Heart left ventricle (tissue), 16 donors: ENCODE measurements at regions of chr16 and their contacts with region 1.

Region 1: DNA sequence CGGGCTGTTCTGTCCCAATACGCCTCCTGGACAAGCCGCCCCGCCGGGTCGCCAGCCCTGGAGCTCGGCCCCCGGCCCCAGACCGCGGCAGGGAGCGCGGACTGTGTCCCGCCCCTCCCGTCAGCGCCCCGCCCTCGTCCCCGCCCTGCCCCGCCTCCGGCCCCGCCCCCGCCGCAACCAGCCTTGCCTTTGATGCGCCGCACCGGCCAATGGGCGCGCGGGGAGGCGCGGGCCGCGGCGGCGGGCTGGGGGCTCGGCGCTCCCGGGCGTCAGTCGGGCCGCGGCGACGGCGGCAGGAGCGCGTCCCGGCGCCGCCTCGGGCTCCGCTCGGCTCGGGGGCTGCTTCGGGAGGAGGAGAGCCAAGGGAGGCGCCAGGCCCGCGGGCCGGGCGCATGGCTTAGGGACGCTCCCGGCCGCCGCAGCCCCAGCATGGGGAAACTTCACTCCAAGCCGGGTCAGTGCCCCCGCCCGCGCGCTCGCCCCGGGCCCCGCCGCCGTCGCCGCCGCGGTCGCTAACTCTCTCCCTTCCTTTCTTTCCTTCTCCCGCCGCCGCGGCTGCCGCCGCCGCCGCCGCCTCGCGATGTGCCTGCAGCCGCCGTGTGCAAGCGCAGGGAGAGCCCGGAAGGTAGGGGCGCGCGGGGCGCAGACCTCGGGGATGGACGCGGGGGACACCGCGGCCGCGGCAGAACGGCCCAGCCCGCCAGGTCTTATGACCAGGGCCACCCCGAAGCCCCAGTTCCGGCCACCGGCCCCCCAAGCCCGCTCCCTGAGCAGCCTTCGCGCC is at the start of gene NKD1:
- DNase-seq: peak; percentile 56 to 82 (median 71)
- ATAC-seq: peak; percentile 59 to 94 (median 86)
- H3K4me3 ChIP-seq: peak within 1 kb of the TSS; percentile 45 to 84 (median 63)
- H3K27ac ChIP-seq: peak within 1 kb of the TSS in 2 of 12 donors; percentile 38 to 59
- H3K4me1 ChIP-seq: peaks cover 0 to 18% (median 7%) of the 10 kb centered on the region in 12 donors
- H3K27me3 ChIP-seq: peaks cover 0 to 30% (median 11%) of the 10 kb centered on the region in 9 donors
- CTCF ChIP-seq: no peak
- POLR2A ChIP-seq: peak in 1 of 2 donors; percentile 32
- total RNA-seq, gene NKD1: 0.05 to 1.0 (median 0.26) TPM

Region 2: GRCh38 chr16:50368410-50369132 is 179.7 kb before region 1 on chr16 and contains the start of gene BRD7:
- intact Hi-C with region 1: loop called in 1 of 10 experiments (anchors 10 kb)
- DNase-seq: peak; percentile 54 to 85 (median 70)
- ATAC-seq: peak; percentile 34 to 85 (median 68)
- H3K4me3 ChIP-seq: peak within 1 kb of the TSS; percentile 78 to 99 (median 96)
- H3K27ac ChIP-seq: peak within 1 kb of the TSS in 11 of 12 donors; percentile 39 to 82 (median 65)
- H3K4me1 ChIP-seq: peaks cover 7 to 48% (median 22%) of the 10 kb centered on the region in 12 donors
- H3K27me3 ChIP-seq: no peaks in the 10 kb centered on the region
- CTCF ChIP-seq: peak in 10 of 12 donors; percentile 33 to 76 (median 60)
- POLR2A ChIP-seq: no peak
- total RNA-seq, gene BRD7: 29.8 to 49.7 (median 45.3) TPM

Region 3: DNA sequence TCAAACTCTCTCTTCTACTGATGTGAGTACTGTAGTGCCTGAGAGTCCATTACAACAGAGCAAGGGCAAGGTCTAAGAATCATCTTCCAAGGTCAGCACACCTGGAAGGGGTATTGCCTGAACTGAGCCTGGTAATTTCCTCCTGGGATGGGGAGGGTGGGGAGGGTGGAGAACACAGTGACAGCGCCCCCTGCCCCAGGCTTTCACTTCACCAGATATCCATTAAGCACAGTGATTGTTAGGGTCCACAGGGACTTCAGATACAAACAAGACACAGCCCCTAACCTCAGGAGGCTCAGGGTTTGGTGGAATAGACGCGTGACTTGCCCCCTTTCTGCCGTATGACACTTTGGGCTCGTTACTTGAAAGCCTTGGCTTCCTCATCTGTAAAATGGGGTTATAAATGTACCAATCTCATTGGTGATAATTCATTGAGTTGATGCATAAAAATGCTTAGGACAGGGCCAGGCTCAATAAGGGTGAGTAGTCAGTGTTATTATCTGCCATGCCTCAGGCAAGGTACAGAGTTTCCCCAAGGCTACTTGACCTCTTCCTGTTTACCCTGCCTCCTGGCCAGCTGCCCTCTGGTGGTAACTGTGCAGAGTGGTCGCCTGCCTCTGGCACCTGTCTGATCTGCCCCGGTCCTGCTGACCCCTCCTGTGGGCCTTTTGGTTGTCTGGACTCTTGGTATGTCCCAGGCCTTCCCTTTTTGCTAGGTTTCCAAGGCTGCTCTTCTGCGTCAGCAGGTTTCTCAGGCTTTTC is 166.5 kb before region 1 on chr16:
- intact Hi-C with region 1: loop called in 2 of 10 experiments (anchors 10 kb)
- DNase-seq: no peak
- ATAC-seq: no peak
- H3K4me3 ChIP-seq: no peak overlapping the region
- H3K27ac ChIP-seq: no peak overlapping the region
- H3K4me1 ChIP-seq: no peaks in the 10 kb centered on the region
- H3K27me3 ChIP-seq: peaks cover 0 to 8% (median 0%) of the 10 kb centered on the region in 9 donors
- CTCF ChIP-seq: no peak
- POLR2A ChIP-seq: no peak

Region 4: GRCh38 chr16:50480206-50480605 is 68.1 kb before region 1 on chr16:
- intact Hi-C with region 1: loop called in 1 of 10 experiments (anchors 10 kb)
- DNase-seq: no peak
- ATAC-seq: no peak
- H3K4me3 ChIP-seq: no peak overlapping the region
- H3K27ac ChIP-seq: no peak overlapping the region
- H3K4me1 ChIP-seq: no peaks in the 10 kb centered on the region
- H3K27me3 ChIP-seq: peaks cover 0 to 30% (median 0%) of the 10 kb centered on the region in 9 donors
- CTCF ChIP-seq: no peak
- POLR2A ChIP-seq: no peak